Spleen (tissue), 13 donors: ENCODE measurements at regions of chr14 and their contacts with region 1.

Region 1: DNA sequence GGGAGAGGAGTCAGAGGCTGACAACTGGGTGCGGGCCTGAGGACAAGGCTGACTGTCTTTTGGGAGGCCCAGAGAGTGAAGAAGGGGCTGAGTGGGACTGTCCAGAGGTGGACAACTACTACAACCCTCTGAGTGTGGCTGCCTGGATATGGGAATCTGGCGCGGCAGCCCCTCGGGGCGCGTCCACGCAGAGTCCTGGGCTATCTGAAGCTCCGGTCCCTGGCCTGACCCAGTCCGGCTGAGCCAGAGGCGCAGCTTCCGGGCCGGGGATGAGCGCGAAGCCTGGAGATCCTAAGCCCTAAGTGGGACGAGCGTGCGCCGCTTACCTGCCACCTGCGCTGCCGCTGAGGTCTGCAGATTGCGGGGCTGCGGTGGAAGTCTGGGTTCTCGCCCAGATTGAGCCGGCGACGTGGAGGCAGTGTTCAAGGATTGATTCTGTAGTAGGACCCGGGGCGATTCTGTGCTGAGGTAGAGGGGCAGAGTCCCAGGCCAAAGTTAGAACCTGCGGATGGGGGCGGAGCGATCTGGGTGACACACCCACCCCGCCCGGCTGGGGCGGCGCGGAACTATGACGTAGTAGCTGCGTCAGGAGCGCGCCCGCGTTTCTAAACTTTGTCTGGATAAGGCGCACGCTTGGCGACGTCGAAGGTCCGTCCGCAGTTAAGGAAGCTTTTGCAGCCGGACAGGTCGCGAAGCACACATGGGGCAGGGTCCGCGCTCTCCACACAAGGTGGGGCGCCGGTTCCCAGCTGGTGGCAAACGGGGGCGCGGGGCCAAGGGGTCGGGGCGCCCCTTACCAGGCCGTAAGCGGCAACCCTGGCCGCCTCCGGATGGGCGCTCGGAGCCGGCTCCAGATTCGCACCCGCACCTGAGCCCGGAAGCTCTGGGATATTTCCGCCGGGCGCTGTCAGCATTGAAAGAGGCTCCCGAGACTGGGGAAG is at the starts of genes DHRS1 and NOP9:
- DNase-seq: peak; percentile 98
- H3K4me3 ChIP-seq: peak within 1 kb of the TSS; percentile 87 to 99 (median 96)
- H3K27ac ChIP-seq: peak within 1 kb of the TSS; percentile 85 to 95 (median 90)
- H3K4me1 ChIP-seq: peaks cover 31 to 72% (median 62%) of the 10 kb centered on the region in 6 donors
- H3K27me3 ChIP-seq: no peaks in the 10 kb centered on the region
- CTCF ChIP-seq: peak in 2 of 11 experiments; percentile 25 to 35
- POLR2A ChIP-seq: peak in 2 of 3 donors; percentile 37 to 87
- total RNA-seq, gene DHRS1: 29.9 to 56.1 (median 34.0) TPM
- total RNA-seq, gene NOP9: 16.8 to 26.9 (median 22.9) TPM

Region 2: GRCh38 chr14:24241829-24242443 is 57.6 kb before region 1 on chr14:
- intact Hi-C with region 1: loop called (anchors 2 kb)
- DNase-seq: peak; percentile 99
- H3K4me3 ChIP-seq: peak overlapping the region; percentile 58 to 83 (median 68)
- H3K27ac ChIP-seq: peak overlapping the region; percentile 97 to 100 (median 99)
- H3K4me1 ChIP-seq: peaks cover 39 to 78% (median 58%) of the 10 kb centered on the region in 6 donors
- H3K27me3 ChIP-seq: no peaks in the 10 kb centered on the region
- CTCF ChIP-seq: peak; percentile 64 to 91 (median 86)
- POLR2A ChIP-seq: no peak

Region 3: DNA sequence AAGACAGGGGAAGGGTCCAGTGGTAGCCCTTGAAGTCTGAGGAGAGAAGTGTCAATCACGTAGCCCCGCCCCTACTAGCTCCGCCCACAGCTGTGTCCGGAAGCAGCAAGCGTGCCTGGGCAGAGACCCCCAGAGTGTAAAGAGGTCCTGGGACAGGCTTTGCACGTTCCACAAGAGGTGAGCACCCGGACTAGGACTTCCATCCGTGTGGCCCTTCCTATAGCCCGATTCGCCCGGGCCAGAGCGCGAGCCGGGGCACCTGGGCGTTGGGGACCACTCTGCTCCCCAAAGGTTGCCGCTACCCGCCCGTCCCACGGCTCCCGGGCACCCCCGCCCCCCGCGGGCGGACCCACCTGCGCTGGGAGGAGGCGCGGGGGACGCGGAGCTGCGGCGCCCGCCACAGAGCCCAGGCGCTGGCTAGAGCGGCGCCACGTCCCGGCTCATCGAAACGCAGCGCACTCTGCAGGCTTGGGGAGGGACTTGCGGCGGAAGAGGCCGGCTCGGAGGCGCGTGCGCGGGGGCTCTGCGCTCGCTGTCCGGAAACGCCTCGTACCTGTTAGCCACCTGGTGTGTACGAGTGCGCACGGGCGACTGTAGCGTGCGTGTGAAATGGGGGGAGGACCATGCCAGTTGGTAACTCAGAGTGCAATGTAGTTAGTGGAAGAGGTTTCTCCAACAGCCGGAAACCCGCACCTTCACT is 28.2 kb before region 1 on chr14 and contains the start of gene RABGGTA:
- intact Hi-C with region 1: no loop called
- DNase-seq: peak; percentile 99
- H3K4me3 ChIP-seq: peak within 1 kb of the TSS; percentile 46 to 82 (median 68)
- H3K27ac ChIP-seq: peak within 1 kb of the TSS; percentile 87 to 100 (median 99)
- H3K4me1 ChIP-seq: peaks cover 7 to 67% (median 50%) of the 10 kb centered on the region in 6 donors
- H3K27me3 ChIP-seq: no peaks in the 10 kb centered on the region
- CTCF ChIP-seq: peak; percentile 63 to 93 (median 83)
- POLR2A ChIP-seq: peak; percentile 8 to 49 (median 48)
- total RNA-seq, gene RABGGTA: 41.7 to 63.0 (median 48.6) TPM